CD4-positive, alpha-beta memory T cell (primary cell): ENCODE measurements at regions of chr12 and their contacts with region 1.

Region 1: GRCh38 chr12:43835656-43836474 is at the start of gene TMEM117:
- DNase-seq: peak; percentile 66 to 74 (median 70)
- H3K4me3 ChIP-seq: peak within 1 kb of the TSS; percentile 26 to 67
- H3K4me3 Mint-ChIP-seq: peak within 1 kb of the TSS; percentile 85 to 98 (median 90)
- H3K27ac ChIP-seq: peak within 1 kb of the TSS; percentile 61
- H3K27ac Mint-ChIP-seq: peak within 1 kb of the TSS; percentile 85 to 98 (median 91)
- H3K4me1 ChIP-seq: peaks cover 46% of the 10 kb centered on the region
- H3K4me1 Mint-ChIP-seq: peaks cover 29 to 55% (median 46%) of the 10 kb centered on the region in 4 donors
- H3K27me3 ChIP-seq: no peaks in the 10 kb centered on the region
- H3K27me3 Mint-ChIP-seq: no peaks in the 10 kb centered on the region
- total RNA-seq, gene TMEM117: 3.7 to 4.7 TPM

Region 2: DNA sequence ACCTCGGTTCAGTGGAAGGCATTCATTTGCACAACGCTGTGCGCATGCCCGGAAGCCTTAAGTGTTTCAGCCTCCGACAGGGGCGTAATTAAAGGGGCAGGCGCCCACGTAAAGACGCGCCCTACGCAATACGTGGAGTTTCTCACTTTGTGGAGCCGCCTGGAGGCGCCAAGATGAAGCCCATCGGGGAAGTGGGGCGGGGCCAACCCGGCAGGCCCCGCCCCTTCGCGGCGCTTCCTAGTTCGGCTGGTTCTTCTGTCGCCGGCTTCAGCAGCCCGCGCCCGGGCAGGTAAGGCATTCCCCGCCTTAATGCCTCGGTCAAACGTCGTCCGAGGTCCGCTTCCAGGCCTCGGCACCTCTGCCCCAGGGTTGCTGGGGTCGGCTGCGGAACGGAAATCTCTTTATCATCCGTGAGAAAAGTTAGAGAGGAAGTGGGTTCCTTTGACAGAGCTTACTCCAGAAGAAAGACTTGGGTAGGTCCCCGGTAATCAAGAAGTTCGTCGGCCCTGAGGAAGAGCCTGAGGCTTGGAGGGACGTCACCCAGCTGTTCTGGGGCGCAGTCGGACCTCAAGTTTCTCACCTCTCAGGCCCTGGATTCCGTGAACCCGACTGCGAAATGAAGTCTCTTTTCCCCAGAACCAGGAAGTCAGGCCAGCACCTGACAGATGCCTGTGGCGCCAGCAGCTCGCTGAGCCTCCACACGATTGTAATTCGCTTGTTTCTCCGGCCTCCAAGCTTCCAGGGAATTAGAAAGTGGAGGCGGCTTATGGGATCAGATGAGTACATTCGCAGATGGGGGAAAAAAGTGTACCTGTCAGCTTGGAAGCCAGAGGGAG is 76.9 kb before region 1 on chr12 and contains the starts of genes IRAK4 and PUS7L:
- CTCF ChIA-PET with region 1: interaction called, 3 read pairs
- POLR2A ChIA-PET with region 1: interaction called, 17 read pairs
- intact Hi-C with region 1: loop called (anchors 2 kb)
- DNase-seq: peak; percentile 90 to 96 (median 93)
- H3K4me3 ChIP-seq: peak within 1 kb of the TSS; percentile 67 to 91
- H3K4me3 Mint-ChIP-seq: peak within 1 kb of the TSS; percentile 98 to 99 (median 98)
- H3K27ac ChIP-seq: peak within 1 kb of the TSS; percentile 93
- H3K27ac Mint-ChIP-seq: peak within 1 kb of the TSS; percentile 99
- H3K4me1 ChIP-seq: peaks cover 61% of the 10 kb centered on the region
- H3K4me1 Mint-ChIP-seq: peaks cover 45 to 84% (median 69%) of the 10 kb centered on the region in 4 donors
- H3K27me3 ChIP-seq: no peaks in the 10 kb centered on the region
- H3K27me3 Mint-ChIP-seq: no peaks in the 10 kb centered on the region
- total RNA-seq, gene IRAK4: 64.0 to 73.1 TPM
- total RNA-seq, gene PUS7L: 25.5 to 25.6 TPM

Region 3: DNA sequence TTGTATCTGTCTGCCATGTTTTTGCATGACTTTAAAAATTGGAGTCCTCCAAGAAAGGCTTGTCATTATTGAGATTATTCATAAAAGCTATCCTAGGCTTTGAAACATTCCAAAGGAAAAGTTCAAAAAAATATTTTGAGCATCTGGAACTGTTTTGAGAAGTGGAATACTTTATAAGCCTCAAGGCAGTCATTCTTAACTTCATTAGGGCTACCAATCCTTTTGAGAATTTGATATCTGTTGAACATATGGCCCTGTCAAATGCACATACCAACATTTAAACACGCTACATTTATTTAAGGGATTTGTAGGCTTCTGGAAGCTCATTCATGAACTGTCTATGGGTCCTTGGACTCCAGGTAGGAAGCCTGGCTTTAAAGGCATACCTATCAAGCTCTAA is 77.0 kb after region 1 on chr12:
- CTCF ChIA-PET with region 1: no interaction called
- POLR2A ChIA-PET with region 1: no interaction called
- intact Hi-C with region 1: no loop called
- DNase-seq: no peak
- H3K4me3 ChIP-seq: no peak overlapping the region
- H3K4me3 Mint-ChIP-seq: no peak overlapping the region
- H3K27ac ChIP-seq: no peak overlapping the region
- H3K27ac Mint-ChIP-seq: no peak overlapping the region
- H3K4me1 ChIP-seq: no peaks in the 10 kb centered on the region
- H3K4me1 Mint-ChIP-seq: peaks cover 0 to 5% (median under 1%) of the 10 kb centered on the region in 4 donors
- H3K27me3 ChIP-seq: no peaks in the 10 kb centered on the region
- H3K27me3 Mint-ChIP-seq: no peaks in the 10 kb centered on the region